ENCODE measurements at regions of chr2 and their contacts with region 1.

Region 1: DNA sequence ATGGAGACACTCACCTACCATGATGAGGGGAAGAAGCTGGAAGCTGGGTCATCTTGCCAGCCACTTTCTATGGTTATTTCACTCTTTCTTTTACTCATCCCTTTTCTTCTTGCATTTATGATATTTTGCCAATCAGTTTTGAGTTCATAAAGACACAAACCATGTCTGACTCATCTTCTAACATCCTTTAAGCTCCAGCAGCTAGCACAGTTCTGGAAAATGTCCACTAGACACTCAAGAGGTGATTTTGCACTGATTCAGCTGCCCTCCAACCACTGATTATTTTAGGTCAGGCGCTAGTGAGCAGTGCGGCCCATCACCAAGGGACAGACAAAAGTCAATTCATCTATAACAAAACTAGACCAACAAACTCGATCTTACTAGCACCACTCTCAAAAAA is 537.1 kb upstream of the ID2 start:
- DNase-seq: no peak
- ATAC-seq: no peak
- H3K4me3 ChIP-seq: no peak overlapping the region
- H3K27ac ChIP-seq: no peak overlapping the region
- H3K4me1 ChIP-seq: peaks cover 0 to 21% (median 14%) of the 10 kb centered on the region in 12 donors
- H3K27me3 ChIP-seq: no peaks in the 10 kb centered on the region
- CTCF ChIP-seq: no peak
- POLR2A ChIP-seq: no peak

Region 2: DNA sequence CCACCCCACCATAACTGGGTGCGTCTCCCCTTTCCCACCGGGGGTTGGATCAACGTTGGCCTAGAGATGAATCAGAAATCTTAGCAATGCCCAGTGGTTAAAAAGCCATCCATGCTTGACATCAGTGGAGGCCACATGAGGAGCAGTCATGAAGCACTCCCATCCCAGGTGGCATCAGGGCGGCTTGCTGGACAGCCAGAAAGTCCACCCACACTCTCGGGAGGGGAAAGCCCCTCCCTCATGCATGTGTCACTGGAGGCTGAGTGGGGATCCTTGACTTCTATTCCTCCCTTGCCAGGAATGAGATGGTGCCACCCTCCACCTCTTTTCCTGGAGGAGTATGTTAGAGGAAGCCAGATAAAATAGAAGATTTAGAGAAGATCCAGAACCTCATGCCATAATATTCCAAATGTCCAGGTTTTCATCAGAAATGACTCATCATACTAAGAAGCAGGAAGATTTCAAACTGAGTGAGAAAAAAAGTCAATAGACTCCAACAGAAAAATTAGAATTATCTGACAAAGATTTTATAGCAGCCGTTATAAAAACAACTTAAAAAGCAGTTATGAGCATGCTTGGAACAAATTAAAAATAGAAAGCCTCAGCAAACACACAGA is 30.0 kb after region 1 on chr2:
- intact Hi-C with region 1: loop called in 1 of 10 experiments (anchors 2 kb)
- DNase-seq: no peak
- ATAC-seq: peak in 1 of 4 donors; percentile 36
- H3K4me3 ChIP-seq: no peak overlapping the region
- H3K27ac ChIP-seq: peak overlapping the region in 2 of 12 donors; percentile 1 to 15
- H3K4me1 ChIP-seq: peaks cover 0 to 22% (median 6%) of the 10 kb centered on the region in 12 donors
- H3K27me3 ChIP-seq: no peaks in the 10 kb centered on the region
- CTCF ChIP-seq: no peak
- POLR2A ChIP-seq: no peak

Region 3: GRCh38 chr2:8202132-8202531 is 57.3 kb after region 1 on chr2:
- intact Hi-C with region 1: no loop called
- DNase-seq: no peak
- ATAC-seq: no peak
- H3K4me3 ChIP-seq: no peak overlapping the region
- H3K27ac ChIP-seq: no peak overlapping the region
- H3K4me1 ChIP-seq: no peaks in the 10 kb centered on the region
- H3K27me3 ChIP-seq: no peaks in the 10 kb centered on the region
- CTCF ChIP-seq: no peak
- POLR2A ChIP-seq: no peak

Region 4: GRCh38 chr2:8229546-8229986 is 84.8 kb after region 1 on chr2:
- intact Hi-C with region 1: loop called in 2 of 10 experiments (anchors 5 kb)
- DNase-seq: peak in 4 of 5 donors; percentile 47 to 71 (median 60)
- ATAC-seq: peak; percentile 55 to 78 (median 73)
- H3K4me3 ChIP-seq: no peak overlapping the region
- H3K27ac ChIP-seq: peak overlapping the region in 4 of 12 donors; percentile 4 to 55 (median 19)
- H3K4me1 ChIP-seq: peaks cover 0 to 35% (median 17%) of the 10 kb centered on the region in 12 donors
- H3K27me3 ChIP-seq: no peaks in the 10 kb centered on the region
- CTCF ChIP-seq: no peak
- POLR2A ChIP-seq: no peak

Measured in heart left ventricle (tissue), 16 donors.